Caco-2 (cell line): ENCODE measurements at regions of chr22 and their contacts with region 1.

Region 1: GRCh38 chr22:50276143-50276542 is 6.0 kb upstream of the MAPK11 start:
- DNase-seq: peak in 1 of 2 experiments; percentile 72
- H3K4me3 ChIP-seq: no peak overlapping the region
- H3K4me3 Mint-ChIP-seq: no peak overlapping the region
- H3K27ac Mint-ChIP-seq: no peak overlapping the region
- H3K4me1 ChIP-seq: peaks cover 5% of the 10 kb centered on the region
- H3K4me1 Mint-ChIP-seq: no peaks in the 10 kb centered on the region
- H3K27me3 ChIP-seq: no peaks in the 10 kb centered on the region
- H3K27me3 Mint-ChIP-seq: no peaks in the 10 kb centered on the region
- CTCF ChIP-seq: peak; percentile 63 to 64

Region 2: GRCh38 chr22:50293441-50294318 is 17.5 kb after region 1 on chr22:
- CTCF ChIA-PET with region 1: interaction called, 13 read pairs
- POLR2A ChIA-PET with region 1: no interaction called
- intact Hi-C with region 1: no loop called
- DNase-seq: peak; percentile 90 to 92
- H3K4me3 ChIP-seq: peak overlapping the region; percentile 46
- H3K4me3 Mint-ChIP-seq: peak overlapping the region; percentile 75
- H3K27ac Mint-ChIP-seq: peak overlapping the region; percentile 90
- H3K4me1 ChIP-seq: peaks cover 45% of the 10 kb centered on the region
- H3K4me1 Mint-ChIP-seq: peaks cover 16% of the 10 kb centered on the region
- H3K27me3 ChIP-seq: no peaks in the 10 kb centered on the region
- H3K27me3 Mint-ChIP-seq: no peaks in the 10 kb centered on the region
- CTCF ChIP-seq: no peak

Region 3: DNA sequence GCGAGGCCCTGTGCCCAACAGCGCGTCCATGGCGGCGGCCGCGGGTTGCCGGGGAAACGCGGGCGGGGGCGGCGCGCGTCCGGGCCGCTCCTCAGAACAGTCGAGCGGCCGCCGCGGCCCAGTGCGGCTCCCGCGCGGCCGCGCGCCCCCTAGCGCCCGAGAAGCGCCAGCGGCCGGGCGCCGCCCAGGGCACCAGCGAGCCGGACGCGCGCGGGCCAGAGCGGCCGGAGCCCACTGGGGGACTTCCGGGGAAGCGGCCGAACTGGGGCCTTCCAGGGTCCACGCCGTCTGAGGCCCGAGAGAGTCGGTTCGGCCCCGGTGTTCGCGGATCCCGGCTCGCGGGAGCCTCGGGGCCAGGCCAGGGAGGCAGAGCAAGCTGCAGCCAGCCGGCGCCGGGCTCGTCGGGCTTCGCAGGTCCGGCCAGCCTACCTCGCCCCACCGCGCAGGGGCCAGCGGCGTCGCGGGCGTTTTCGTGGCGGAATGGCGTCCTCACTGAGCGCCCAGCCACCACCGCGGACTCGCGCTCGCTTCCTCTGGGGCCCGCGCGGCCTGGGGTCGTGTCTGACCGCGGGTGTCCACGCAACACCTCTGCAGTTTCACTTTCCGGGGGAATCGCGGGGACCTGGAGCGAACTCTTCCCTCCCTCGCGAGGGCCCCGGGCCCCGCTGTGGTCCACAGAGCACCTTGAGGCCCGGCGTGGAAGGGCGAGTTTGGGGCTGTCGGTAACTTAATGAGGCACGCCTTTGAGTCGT is 51.0 kb after region 1 on chr22 and contains the start of gene DENND6B:
- CTCF ChIA-PET with region 1: interaction called, 4 read pairs
- POLR2A ChIA-PET with region 1: no interaction called
- intact Hi-C with region 1: loop called (anchors 5 kb)
- DNase-seq: peak; percentile 61 to 86
- H3K4me3 ChIP-seq: peak within 1 kb of the TSS; percentile 95
- H3K4me3 Mint-ChIP-seq: peak within 1 kb of the TSS; percentile 92
- H3K27ac Mint-ChIP-seq: peak within 1 kb of the TSS; percentile 84
- H3K4me1 ChIP-seq: no peaks in the 10 kb centered on the region; the same call in 1 of the 2 replicates
- H3K4me1 Mint-ChIP-seq: peaks cover 15% of the 10 kb centered on the region
- H3K27me3 ChIP-seq: no peaks in the 10 kb centered on the region
- H3K27me3 Mint-ChIP-seq: no peaks in the 10 kb centered on the region
- CTCF ChIP-seq: peak; percentile 9 to 26
- total RNA-seq, gene DENND6B: 3.4 and 5.5 TPM in 2 replicates

Region 4: DNA sequence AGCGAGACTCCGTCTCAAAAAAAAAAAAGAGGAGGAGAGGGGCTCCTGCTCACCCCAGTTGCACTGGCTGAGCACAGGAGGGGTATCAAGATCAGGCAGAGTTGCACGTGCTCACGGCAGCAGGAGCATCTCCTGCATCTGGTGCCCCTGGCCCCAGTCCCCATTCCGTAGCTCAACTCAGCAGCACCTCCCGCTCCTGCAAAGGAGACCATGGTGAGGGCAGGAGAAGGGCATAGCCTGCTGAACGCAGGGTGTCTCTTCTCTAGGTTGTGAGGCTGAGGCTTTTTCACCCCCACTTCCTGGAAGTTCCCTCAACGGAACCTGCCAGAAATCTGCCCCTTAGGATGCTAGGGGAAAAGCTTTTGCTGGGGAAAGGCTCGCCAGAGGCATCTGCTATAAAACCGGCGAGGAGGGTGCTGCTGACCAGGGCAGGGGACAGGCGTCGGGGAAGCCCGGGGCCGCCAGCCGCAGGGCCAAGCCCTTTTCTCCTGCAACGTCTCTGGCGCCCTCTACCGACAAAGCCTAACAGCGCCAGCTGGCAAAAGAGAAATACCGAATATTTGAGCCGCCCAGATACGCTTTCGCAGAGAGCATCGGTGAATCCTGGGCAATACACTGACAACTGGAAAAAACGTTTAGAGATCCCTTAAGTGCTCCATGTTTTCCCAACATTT is 66.0 kb after region 1 on chr22:
- CTCF ChIA-PET with region 1: interaction called, 3 read pairs
- POLR2A ChIA-PET with region 1: no interaction called
- intact Hi-C with region 1: loop called (anchors 5 kb)
- DNase-seq: peak; percentile 89 to 92
- H3K4me3 ChIP-seq: peak overlapping the region; percentile 61
- H3K4me3 Mint-ChIP-seq: peak overlapping the region; percentile 64
- H3K27ac Mint-ChIP-seq: no peak overlapping the region
- H3K4me1 ChIP-seq: no peaks in the 10 kb centered on the region
- H3K4me1 Mint-ChIP-seq: peaks cover 6% of the 10 kb centered on the region
- H3K27me3 ChIP-seq: no peaks in the 10 kb centered on the region
- H3K27me3 Mint-ChIP-seq: no peaks in the 10 kb centered on the region
- CTCF ChIP-seq: peak; percentile 90 to 94